Activated B cell treated with CpG ODN at 0.5 μM for 24 hours (primary cell): ENCODE measurements at regions of chr18 and their contacts with region 1.

Region 1: GRCh38 chr18:25351777-25352628 is at the start of gene ZNF521:
- DNase-seq: peak; percentile 46
- ATAC-seq: peak; percentile 90
- H3K4me3 Mint-ChIP-seq: peak within 1 kb of the TSS; percentile 83
- H3K27ac Mint-ChIP-seq: peak within 1 kb of the TSS; percentile 42
- H3K4me1 Mint-ChIP-seq: peaks cover 23% of the 10 kb centered on the region
- H3K27me3 Mint-ChIP-seq: peaks cover 39% of the 10 kb centered on the region
- CTCF ChIP-seq: no peak
- total RNA-seq, gene ZNF521: 0.16 and 0.61 TPM in 2 replicates

Region 2: GRCh38 chr18:24878289-24878688 is 473.7 kb before region 1 on chr18:
- CTCF ChIA-PET with region 1: no interaction called
- POLR2A ChIA-PET with region 1: no interaction called
- intact Hi-C with region 1: loop called (anchors 1 kb)
- DNase-seq: no peak
- ATAC-seq: no peak
- H3K4me3 Mint-ChIP-seq: no peak overlapping the region
- H3K27ac Mint-ChIP-seq: no peak overlapping the region
- H3K4me1 Mint-ChIP-seq: peaks cover 5% of the 10 kb centered on the region
- H3K27me3 Mint-ChIP-seq: peaks cover 6% of the 10 kb centered on the region
- CTCF ChIP-seq: no peak

Region 3: DNA sequence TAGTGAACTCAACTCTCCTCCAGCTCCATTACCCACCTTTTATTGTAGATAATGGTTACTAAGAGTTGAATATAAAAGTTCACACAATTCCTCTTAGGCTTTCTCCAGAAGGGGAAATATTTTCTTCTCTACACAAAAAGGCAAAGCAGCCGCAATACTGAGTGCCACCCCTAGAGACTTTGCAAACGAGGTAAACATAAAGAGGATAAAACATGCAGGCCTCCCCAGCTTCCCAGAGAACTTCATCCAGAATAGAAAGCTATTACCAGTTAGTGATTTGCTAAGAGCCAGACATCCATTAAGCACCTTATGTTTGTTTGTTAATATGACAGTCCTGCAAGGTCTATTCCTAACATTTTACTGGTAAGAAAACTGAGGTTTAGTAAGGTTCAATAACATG is 17.4 kb before region 1 on chr18:
- CTCF ChIA-PET with region 1: no interaction called
- POLR2A ChIA-PET with region 1: no interaction called
- intact Hi-C with region 1: loop called (anchors 2 kb)
- DNase-seq: no peak
- ATAC-seq: no peak
- H3K4me3 Mint-ChIP-seq: no peak overlapping the region
- H3K27ac Mint-ChIP-seq: no peak overlapping the region
- H3K4me1 Mint-ChIP-seq: no peaks in the 10 kb centered on the region
- H3K27me3 Mint-ChIP-seq: peaks cover 18% of the 10 kb centered on the region
- CTCF ChIP-seq: no peak

Region 4: DNA sequence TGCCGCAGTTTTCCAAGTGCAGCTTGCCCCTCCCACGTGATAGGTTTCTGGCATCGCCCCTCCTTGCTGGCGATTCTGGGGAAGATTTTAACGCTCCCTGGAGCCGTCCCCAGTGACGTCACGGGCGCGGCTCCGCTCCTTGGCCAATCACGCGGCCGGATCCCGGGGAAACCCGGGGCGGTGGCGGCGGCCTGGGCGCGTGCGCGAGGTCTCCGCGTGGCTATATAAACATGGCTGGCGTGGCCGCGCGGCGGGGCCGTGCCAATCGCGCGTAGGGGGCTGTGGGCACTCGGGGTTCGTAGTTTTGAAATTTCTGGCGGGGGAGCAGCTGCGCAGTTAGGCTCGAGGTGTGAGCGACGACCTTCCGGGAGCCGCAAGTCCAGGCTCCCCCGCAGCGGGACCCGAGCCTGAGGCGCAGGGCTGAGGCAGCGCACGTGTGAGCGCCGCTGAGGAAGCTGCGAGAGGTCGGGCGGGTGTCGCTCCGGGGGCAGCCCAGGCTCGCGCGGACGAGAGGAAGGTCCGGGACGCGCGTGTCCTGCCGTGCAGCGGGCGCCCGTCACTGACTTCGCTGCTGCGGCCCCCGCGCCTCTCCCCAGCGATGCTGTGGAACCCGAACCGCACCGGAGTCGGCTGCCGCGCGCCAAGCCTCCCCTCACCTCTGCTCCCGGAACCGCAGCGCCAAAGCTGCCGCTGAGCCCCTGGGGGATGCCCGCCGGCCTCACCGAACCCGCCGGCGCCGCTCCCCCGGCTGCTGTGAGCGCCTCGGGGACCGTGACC is 874.4 kb after region 1 on chr18 and contains the start of gene TAF4B:
- CTCF ChIA-PET with region 1: no interaction called
- POLR2A ChIA-PET with region 1: no interaction called
- intact Hi-C with region 1: loop called (anchors 2 kb)
- DNase-seq: peak; percentile 95
- ATAC-seq: peak; percentile 83
- H3K4me3 Mint-ChIP-seq: peak within 1 kb of the TSS; percentile 96
- H3K27ac Mint-ChIP-seq: peak within 1 kb of the TSS; percentile 97
- H3K4me1 Mint-ChIP-seq: peaks cover 22% of the 10 kb centered on the region
- H3K27me3 Mint-ChIP-seq: no peaks in the 10 kb centered on the region
- CTCF ChIP-seq: no peak
- total RNA-seq, gene TAF4B: 11.6 and 13.4 TPM in 2 replicates